ENCODE measurements at regions of chr1 and their contacts with region 1.

Region 1: GRCh38 chr1:24830680-24831272 is 85.5 kb downstream of the CLIC4 start:
- DNase-seq: no peak
- ATAC-seq: no peak
- H3K4me3 Mint-ChIP-seq: no peak overlapping the region
- H3K27ac Mint-ChIP-seq: no peak overlapping the region
- H3K4me1 Mint-ChIP-seq: no peaks in the 10 kb centered on the region
- H3K27me3 Mint-ChIP-seq: peaks cover 2% of the 10 kb centered on the region
- CTCF ChIP-seq: peak; percentile 96

Region 2: DNA sequence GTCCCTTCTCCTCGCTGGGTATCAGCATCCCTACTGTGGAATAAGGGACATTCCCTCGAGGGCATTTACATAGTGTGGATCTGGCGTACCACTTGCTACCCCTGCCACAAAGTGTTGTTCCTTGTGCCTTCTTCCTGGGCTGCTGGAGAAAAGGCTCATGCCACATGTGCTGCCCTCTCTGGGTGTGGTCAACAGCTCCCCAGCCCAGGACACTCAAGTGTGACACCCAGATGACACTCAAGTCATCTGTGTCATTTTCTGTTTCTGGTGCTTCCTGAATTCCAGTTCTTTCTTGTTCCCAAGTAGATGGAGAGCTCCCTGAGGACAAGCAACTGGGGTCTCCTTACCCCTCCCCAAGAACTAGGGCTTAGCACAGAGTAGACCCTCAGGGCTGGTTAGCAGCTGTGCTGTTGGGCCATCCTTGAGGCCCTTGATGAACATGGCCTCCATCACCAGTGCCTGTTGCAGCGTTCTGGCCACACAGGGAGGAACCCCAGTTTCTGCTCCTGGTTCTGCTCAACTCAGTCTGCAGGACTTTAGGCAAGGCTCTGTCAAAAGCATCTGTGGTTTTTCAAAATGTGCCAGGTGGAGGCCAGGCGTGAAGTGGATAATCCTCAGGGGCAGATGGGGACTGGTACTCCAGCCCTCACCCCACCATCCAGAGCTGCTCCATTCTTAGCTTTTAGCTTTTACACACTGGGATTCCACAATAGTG is 134.6 kb before region 1 on chr1:
- CTCF ChIA-PET with region 1: interaction called, 261 read pairs
- POLR2A ChIA-PET with region 1: no interaction called
- intact Hi-C with region 1: no loop called
- DNase-seq: no peak
- ATAC-seq: no peak
- H3K4me3 Mint-ChIP-seq: no peak overlapping the region
- H3K27ac Mint-ChIP-seq: no peak overlapping the region
- H3K4me1 Mint-ChIP-seq: no peaks in the 10 kb centered on the region
- H3K27me3 Mint-ChIP-seq: no peaks in the 10 kb centered on the region
- CTCF ChIP-seq: no peak